ENCODE measurements at regions of chr21 and their contacts with region 1.

Region 1: GRCh38 chr21:31180256-31181081 is 142.2 kb upstream of the KRTAP19-8 start:
- DNase-seq: peak in 4 of 10 donors; percentile 20 to 56 (median 44)
- ATAC-seq: no peak
- H3K4me3 Mint-ChIP-seq: peak overlapping the region; percentile 41 to 86 (median 80)
- H3K27ac Mint-ChIP-seq: peak overlapping the region; percentile 91 to 98 (median 96)
- H3K4me1 Mint-ChIP-seq: peaks cover 47 to 75% (median 71%) of the 10 kb centered on the region in 4 donors
- H3K27me3 Mint-ChIP-seq: no peaks in the 10 kb centered on the region

Region 2: GRCh38 chr21:31117128-31117916 is 63.1 kb before region 1 on chr21:
- POLR2A ChIA-PET with region 1: interaction called, 12 read pairs
- DNase-seq: no peak
- ATAC-seq: no peak
- H3K4me3 Mint-ChIP-seq: no peak overlapping the region
- H3K27ac Mint-ChIP-seq: peak overlapping the region in 1 of 10 donors; percentile 38
- H3K4me1 Mint-ChIP-seq: peaks cover 0 to 16% (median 4%) of the 10 kb centered on the region in 4 donors
- H3K27me3 Mint-ChIP-seq: no peaks in the 10 kb centered on the region

Region 3: DNA sequence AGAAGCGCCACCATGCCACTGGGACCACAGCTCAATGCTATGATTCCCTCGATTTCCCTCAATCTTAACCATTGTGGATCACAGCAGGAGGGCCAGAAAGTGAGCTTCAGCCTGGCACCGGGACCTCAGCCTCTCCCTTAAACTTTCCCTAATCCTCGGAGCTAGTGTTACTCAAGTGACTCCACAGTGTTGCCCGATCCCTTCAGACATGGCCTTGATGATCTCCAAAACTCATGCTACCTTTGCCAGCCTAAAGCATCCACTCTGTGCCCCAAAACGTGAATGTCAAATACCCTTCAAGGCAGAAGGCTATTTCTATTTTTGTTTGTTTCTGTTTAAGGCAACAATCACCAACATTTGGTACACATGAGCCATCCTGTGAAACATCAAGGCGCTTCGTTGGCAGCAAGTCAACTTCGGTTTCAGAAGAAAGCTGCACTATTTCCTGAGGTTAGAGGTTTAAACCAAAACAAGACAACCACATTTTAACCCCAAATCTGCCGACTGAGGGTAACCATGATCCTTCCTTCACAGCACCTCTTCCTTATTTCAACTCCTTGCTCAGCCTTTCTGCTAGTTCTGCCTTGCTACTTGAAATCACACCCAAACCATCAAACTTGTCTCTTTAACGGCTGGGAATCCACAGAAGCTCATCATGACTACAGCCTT is 47.8 kb before region 1 on chr21:
- POLR2A ChIA-PET with region 1: interaction called, 15 read pairs
- DNase-seq: peak; percentile 24 to 94 (median 85)
- ATAC-seq: peak; percentile 89 to 94
- H3K4me3 Mint-ChIP-seq: peak overlapping the region; percentile 57 to 94 (median 83)
- H3K27ac Mint-ChIP-seq: peak overlapping the region; percentile 42 to 91 (median 82)
- H3K4me1 Mint-ChIP-seq: peaks cover 24 to 58% (median 49%) of the 10 kb centered on the region in 4 donors
- H3K27me3 Mint-ChIP-seq: peaks cover 0 to 4% (median 0%) of the 10 kb centered on the region in 5 donors

Measured in naive thymus-derived CD8-positive, alpha-beta T cell (primary cell).